Ascending aorta (tissue), 2 donors: ENCODE measurements at regions of chr4 and their contacts with region 1.

Region 1: DNA sequence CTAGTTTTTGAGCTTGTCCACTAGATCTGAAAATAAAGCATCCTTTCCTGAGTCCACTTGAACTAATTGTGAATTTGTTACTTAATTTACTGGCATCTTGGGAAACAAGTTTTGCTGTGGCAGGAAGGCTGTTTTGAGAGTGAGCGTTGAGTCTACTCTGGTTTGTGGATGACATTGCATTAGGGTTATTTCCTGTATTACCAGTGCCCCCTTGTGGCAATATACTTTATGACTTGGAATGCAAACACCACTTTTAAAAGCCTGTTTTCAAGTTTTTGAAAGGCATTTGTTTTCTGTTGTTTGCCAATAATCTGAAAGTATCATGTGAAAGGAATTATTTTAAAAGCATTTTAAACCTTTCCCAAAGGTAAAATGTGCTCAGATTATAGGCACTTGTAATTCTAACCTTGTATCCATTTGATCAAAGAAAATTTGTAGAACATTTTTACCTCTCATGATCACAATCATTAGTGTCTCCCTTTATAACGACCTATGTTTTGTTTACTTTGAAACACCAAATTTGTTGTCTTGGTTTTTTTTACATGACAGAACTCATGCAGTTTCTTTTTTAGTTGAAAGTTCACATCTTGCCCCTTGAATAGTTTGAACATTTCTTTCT is 18.0 kb upstream of the CYP2U1 start:
- DNase-seq: peak in 1 of 2 donors; percentile 65
- H3K4me3 ChIP-seq: no peak overlapping the region
- H3K27ac ChIP-seq: no peak overlapping the region
- H3K4me1 ChIP-seq: no peaks in the 10 kb centered on the region
- H3K27me3 ChIP-seq: no peaks in the 10 kb centered on the region
- CTCF ChIP-seq: peak; percentile 68 to 75 (median 72)

Region 2: DNA sequence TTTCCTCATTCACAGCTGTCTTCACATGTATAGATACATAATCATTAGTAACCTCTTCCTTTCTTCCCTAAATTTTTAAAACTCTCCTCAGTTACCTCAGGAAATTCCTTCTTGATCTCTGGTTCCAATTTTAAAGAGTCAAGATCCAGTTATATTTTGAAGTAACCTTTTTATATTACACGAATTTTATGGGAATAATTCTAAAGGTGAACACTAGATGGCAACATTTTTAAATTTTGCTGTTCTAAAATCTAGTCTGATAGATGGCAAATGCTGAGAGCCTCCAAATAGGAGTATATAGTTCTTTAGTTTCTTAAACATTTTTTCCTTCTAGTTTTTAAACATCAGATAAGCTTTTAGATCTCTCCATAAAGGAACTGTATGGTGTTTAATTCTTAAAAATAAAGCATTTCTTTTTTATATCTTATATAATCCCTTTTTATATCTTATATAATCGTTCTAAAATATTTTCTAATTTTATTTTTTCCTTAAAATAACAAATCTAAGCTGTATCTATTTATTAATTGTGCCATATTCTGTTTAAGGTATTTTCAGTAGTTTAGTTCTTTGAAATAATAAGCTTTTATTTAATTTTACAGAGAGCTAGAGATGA is 155.4 kb before region 1 on chr4:
- intact Hi-C with region 1: loop called (anchors 1 kb)
- DNase-seq: no peak
- H3K4me3 ChIP-seq: no peak overlapping the region
- H3K27ac ChIP-seq: no peak overlapping the region
- H3K4me1 ChIP-seq: no peaks in the 10 kb centered on the region
- H3K27me3 ChIP-seq: no peaks in the 10 kb centered on the region
- CTCF ChIP-seq: peak; percentile 13 to 66 (median 65)